HEK293 (cell line): ENCODE measurements at regions of chr11 and their contacts with region 1.

Region 1: GRCh38 chr11:116715383-116715782 is 57.4 kb downstream of the BUD13 start:
- H3K4me3 ChIP-seq: no peak overlapping the region
- H3K27ac ChIP-seq: no peak overlapping the region
- H3K4me1 ChIP-seq: no peaks in the 10 kb centered on the region
- CTCF ChIP-seq: no peak

Region 2: GRCh38 chr11:116732271-116733042 is 17.1 kb after region 1 on chr11:
- CTCF ChIA-PET with region 1: interaction called, 15 read pairs
- POLR2A ChIA-PET with region 1: no interaction called
- H3K4me3 ChIP-seq: no peak overlapping the region
- H3K27ac ChIP-seq: no peak overlapping the region
- H3K4me1 ChIP-seq: no peaks in the 10 kb centered on the region
- CTCF ChIP-seq: peak; percentile 71

Region 3: GRCh38 chr11:116808386-116809194 is 93.2 kb after region 1 on chr11:
- CTCF ChIA-PET with region 1: no interaction called
- POLR2A ChIA-PET with region 1: no interaction called
- H3K4me3 ChIP-seq: no peak overlapping the region
- H3K27ac ChIP-seq: no peak overlapping the region
- H3K4me1 ChIP-seq: no peaks in the 10 kb centered on the region
- CTCF ChIP-seq: no peak